CD4-positive, alpha-beta T cell (primary cell): ENCODE measurements at regions of chr6 and their contacts with region 1.

Region 1: DNA sequence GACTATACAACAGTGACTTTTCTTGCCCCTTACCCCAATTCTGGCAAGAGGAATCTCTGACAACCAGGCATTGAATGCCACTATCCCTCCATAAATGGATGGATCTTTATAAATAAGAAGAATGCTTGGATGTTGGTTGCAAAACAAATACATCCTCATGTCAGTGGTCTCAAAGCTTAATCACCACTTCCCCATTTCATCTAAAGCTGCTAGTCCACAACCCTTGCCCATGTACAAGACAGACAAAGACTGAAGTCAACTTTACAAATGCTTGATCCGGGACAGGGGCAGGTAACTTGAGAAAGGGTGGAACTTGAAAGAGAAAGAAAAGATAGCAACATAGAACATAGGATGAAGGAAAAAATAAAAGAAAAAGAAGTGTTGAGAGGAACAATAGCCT is 540.5 kb upstream of the NOX3 start:
- DNase-seq: no peak
- ATAC-seq: no peak
- H3K4me3 ChIP-seq: no peak overlapping the region
- H3K4me3 Mint-ChIP-seq: no peak overlapping the region
- H3K27ac ChIP-seq: no peak overlapping the region
- H3K27ac Mint-ChIP-seq: no peak overlapping the region
- H3K4me1 ChIP-seq: no peaks in the 10 kb centered on the region
- H3K4me1 Mint-ChIP-seq: no peaks in the 10 kb centered on the region
- H3K27me3 ChIP-seq: no peaks in the 10 kb centered on the region
- H3K27me3 Mint-ChIP-seq: no peaks in the 10 kb centered on the region
- CTCF ChIP-seq: no peak

Region 2: GRCh38 chr6:155543166-155543847 is 452.8 kb before region 1 on chr6:
- CTCF ChIA-PET with region 1: no interaction called
- POLR2A ChIA-PET with region 1: no interaction called
- intact Hi-C with region 1: no loop called
- DNase-seq: peak in 1 of 14 experiments; percentile 7
- ATAC-seq: no peak
- H3K4me3 ChIP-seq: no peak overlapping the region
- H3K4me3 Mint-ChIP-seq: no peak overlapping the region
- H3K27ac ChIP-seq: no peak overlapping the region
- H3K27ac Mint-ChIP-seq: no peak overlapping the region
- H3K4me1 ChIP-seq: no peaks in the 10 kb centered on the region
- H3K4me1 Mint-ChIP-seq: no peaks in the 10 kb centered on the region
- H3K27me3 ChIP-seq: no peaks in the 10 kb centered on the region
- H3K27me3 Mint-ChIP-seq: no peaks in the 10 kb centered on the region
- CTCF ChIP-seq: no peak

Region 3: GRCh38 chr6:155832596-155832995 is 163.6 kb before region 1 on chr6:
- CTCF ChIA-PET with region 1: no interaction called
- POLR2A ChIA-PET with region 1: no interaction called
- intact Hi-C with region 1: loop called in 1 of 2 experiments (anchors 5 kb)
- DNase-seq: no peak
- ATAC-seq: no peak
- H3K4me3 ChIP-seq: no peak overlapping the region
- H3K4me3 Mint-ChIP-seq: no peak overlapping the region
- H3K27ac ChIP-seq: no peak overlapping the region
- H3K27ac Mint-ChIP-seq: no peak overlapping the region
- H3K4me1 ChIP-seq: no peaks in the 10 kb centered on the region
- H3K4me1 Mint-ChIP-seq: no peaks in the 10 kb centered on the region
- H3K27me3 ChIP-seq: no peaks in the 10 kb centered on the region
- H3K27me3 Mint-ChIP-seq: no peaks in the 10 kb centered on the region
- CTCF ChIP-seq: no peak

Region 4: DNA sequence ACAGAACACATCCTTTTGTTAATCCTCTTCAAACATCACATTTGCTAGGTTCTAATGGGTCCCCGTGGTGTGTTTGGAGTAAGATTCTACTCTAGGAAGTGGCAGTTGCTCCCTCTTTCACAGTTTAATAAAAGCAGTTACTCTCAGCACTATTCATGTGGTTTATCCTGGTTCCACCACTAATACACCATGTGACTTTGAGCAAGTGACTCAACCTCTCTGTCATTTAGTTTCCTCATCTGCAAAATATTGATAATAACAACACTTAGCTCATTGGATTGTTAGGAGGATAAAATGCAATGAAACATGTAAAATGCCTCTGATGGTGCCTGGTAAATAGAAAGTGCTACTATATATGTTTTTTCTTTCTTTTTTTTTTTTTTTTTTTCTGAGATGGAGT is 52.5 kb before region 1 on chr6:
- CTCF ChIA-PET with region 1: no interaction called
- POLR2A ChIA-PET with region 1: no interaction called
- intact Hi-C with region 1: no loop called
- DNase-seq: no peak
- ATAC-seq: no peak
- H3K4me3 ChIP-seq: no peak overlapping the region
- H3K4me3 Mint-ChIP-seq: no peak overlapping the region
- H3K27ac ChIP-seq: no peak overlapping the region
- H3K27ac Mint-ChIP-seq: no peak overlapping the region
- H3K4me1 ChIP-seq: no peaks in the 10 kb centered on the region
- H3K4me1 Mint-ChIP-seq: no peaks in the 10 kb centered on the region
- H3K27me3 ChIP-seq: no peaks in the 10 kb centered on the region
- H3K27me3 Mint-ChIP-seq: no peaks in the 10 kb centered on the region
- CTCF ChIP-seq: no peak

Region 5: DNA sequence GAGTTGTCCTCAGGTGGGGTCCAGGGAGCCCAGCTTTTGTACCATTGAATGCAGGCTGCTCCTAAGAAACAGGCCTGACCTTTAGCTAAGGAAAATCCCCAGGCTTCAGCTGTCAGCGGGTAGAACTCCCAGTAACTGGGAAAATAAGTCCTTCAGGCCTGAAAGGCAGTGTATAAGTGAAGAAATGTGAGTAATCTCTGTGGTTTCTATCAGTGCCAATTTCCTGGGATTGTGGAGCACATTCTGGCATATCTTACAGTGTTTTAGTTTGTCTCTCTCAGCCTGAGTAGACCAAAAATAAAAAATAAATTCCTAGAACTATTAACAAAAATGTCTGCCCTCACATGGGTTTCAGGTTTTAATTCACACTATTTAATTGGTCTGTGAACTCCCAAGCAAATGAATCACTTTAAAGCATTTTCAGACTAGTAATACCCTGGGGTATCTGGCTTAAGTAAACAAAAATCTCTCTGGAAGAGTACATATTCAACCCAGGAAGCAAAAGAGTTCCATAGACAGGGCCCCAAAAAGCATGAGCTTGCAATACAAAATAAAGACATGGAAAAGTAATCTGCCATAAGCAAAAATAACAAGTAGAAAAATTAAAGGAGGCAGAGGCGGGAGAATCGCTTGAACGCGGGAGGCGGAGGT is 25.7 kb after region 1 on chr6:
- CTCF ChIA-PET with region 1: no interaction called
- POLR2A ChIA-PET with region 1: no interaction called
- intact Hi-C with region 1: no loop called
- DNase-seq: no peak
- ATAC-seq: no peak
- H3K4me3 ChIP-seq: no peak overlapping the region
- H3K4me3 Mint-ChIP-seq: no peak overlapping the region
- H3K27ac ChIP-seq: no peak overlapping the region
- H3K27ac Mint-ChIP-seq: no peak overlapping the region
- H3K4me1 ChIP-seq: no peaks in the 10 kb centered on the region
- H3K4me1 Mint-ChIP-seq: no peaks in the 10 kb centered on the region
- H3K27me3 ChIP-seq: no peaks in the 10 kb centered on the region
- H3K27me3 Mint-ChIP-seq: no peaks in the 10 kb centered on the region
- CTCF ChIP-seq: no peak

Region 6: DNA sequence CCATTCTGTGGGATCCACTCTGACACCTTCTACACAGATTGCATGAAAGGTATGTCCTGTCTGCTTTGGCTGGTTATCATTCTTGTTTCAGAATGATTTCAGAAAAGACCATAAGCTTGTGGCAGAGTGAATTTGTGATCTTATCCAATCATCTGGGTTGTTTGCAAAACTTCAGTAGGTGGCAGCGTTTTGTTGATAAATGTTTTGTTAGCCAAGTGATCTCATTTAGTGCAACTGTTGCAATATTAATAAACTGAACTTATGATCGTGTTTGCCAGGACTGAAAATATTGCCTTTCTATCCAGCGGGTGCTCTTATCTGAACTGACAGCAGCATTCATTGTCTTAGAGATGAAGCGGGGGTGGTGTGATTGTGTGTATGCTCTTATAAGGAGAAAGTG is 72.7 kb after region 1 on chr6:
- CTCF ChIA-PET with region 1: no interaction called
- POLR2A ChIA-PET with region 1: no interaction called
- intact Hi-C with region 1: no loop called
- DNase-seq: peak in 1 of 14 experiments; percentile 7
- ATAC-seq: no peak
- H3K4me3 ChIP-seq: no peak overlapping the region
- H3K4me3 Mint-ChIP-seq: no peak overlapping the region
- H3K27ac ChIP-seq: no peak overlapping the region
- H3K27ac Mint-ChIP-seq: no peak overlapping the region
- H3K4me1 ChIP-seq: no peaks in the 10 kb centered on the region
- H3K4me1 Mint-ChIP-seq: peaks cover 5% of the 10 kb centered on the region
- H3K27me3 ChIP-seq: no peaks in the 10 kb centered on the region
- H3K27me3 Mint-ChIP-seq: no peaks in the 10 kb centered on the region
- CTCF ChIP-seq: no peak